ENCODE measurements at regions of chr6 and their contacts with region 1.

Region 1: DNA sequence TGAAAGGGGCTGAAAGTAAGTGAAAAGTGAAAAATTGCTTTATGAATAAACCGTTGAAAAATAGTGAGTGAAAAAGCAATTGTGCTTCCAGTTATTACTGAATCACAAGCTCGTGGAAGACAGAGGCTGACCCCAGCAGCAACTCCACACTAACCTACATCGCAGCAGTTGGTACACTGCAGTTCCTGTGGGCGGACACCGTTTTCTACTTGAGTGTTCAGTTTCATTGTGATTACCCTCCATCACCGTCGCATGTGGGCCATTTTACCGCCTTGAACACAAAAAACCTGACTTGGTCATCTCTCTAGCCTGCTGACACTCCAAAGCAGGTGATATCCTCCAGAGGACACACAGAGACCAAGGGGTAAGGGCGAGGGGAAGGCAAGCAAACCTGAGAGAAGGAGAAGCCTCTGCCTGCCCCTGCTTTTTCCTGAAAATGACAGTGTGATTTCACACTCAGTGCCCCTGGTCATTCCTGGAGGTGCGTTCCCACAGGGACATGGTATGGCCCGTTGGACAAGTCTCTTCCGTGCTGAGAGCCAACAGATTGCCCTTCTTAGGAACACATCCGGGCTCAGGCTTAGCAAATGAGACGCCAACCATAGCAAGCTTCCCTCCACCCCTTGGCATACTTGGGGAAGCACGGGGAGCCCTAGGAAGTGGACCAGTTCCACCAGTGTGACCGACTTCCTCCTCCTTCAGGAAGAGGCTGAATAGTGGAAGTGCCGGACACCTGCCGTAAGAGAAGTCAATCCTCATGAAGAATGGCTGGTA is 28.5 kb downstream of the PRDM1 start:
- DNase-seq: peak; percentile 90
- ATAC-seq: peak; percentile 85
- H3K4me3 Mint-ChIP-seq: peak overlapping the region; percentile 38
- H3K27ac Mint-ChIP-seq: peak overlapping the region; percentile 85
- H3K4me1 Mint-ChIP-seq: peaks cover 83% of the 10 kb centered on the region
- H3K27me3 Mint-ChIP-seq: peaks cover 24% of the 10 kb centered on the region

Region 2: DNA sequence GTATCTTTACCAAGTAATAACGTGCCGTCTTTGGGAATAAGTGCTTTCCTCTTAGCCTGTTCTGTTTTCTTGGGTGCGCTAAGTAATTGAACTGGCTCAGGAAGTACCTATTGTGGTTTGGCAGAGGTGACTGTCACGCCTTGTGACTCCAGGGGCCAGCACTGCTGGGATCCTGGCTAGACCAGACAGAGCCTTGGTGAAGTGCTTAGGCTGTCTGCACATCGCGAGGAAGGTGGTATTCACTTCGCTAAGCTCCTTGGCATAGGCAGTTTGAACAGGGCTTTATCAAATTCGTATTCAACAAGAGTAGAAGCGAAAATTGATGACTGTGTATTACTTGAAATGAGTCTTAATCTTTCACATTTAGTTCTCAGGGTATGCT is 11.0 kb before region 1 on chr6:
- CTCF ChIA-PET with region 1: interaction called, 9 read pairs
- POLR2A ChIA-PET with region 1: interaction called, 16 read pairs
- intact Hi-C with region 1: loop called (anchors 1 kb)
- DNase-seq: peak; percentile 65
- ATAC-seq: peak; percentile 47
- H3K4me3 Mint-ChIP-seq: peak overlapping the region; percentile 82
- H3K27ac Mint-ChIP-seq: peak overlapping the region; percentile 62
- H3K4me1 Mint-ChIP-seq: peaks cover 77% of the 10 kb centered on the region
- H3K27me3 Mint-ChIP-seq: peaks cover 16% of the 10 kb centered on the region

Region 3: DNA sequence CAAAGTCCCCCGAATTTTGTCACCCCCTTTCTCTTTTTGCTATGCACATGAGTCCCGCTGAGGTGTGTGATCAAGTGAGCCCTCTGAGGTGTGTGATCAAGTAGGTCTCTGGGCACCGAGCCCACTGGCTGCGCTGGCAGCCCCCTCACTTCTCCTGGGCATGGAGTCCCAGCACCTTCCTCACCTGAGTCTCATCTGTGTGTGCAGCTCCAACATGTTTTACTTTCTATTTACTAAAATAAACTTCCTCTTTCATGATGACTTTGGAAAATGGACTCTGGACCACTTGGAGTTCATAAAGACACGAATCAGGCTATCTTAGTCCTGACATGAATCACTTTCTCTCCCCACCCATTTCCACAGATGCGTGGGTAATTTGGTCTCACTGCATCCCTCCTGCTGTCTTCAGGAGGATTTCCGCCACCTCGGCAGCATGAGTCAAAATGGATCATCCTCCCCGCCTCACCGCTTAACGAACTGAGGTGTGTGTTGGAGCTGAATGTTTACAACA is 11.3 kb after region 1 on chr6:
- CTCF ChIA-PET with region 1: interaction called, 4 read pairs
- POLR2A ChIA-PET with region 1: interaction called, 4 read pairs
- intact Hi-C with region 1: loop called in 1 of 2 experiments (anchors 1 kb)
- DNase-seq: peak; percentile 74
- ATAC-seq: peak; percentile 83
- H3K4me3 Mint-ChIP-seq: peak overlapping the region; percentile 27
- H3K27ac Mint-ChIP-seq: peak overlapping the region; percentile 68
- H3K4me1 Mint-ChIP-seq: peaks cover 33% of the 10 kb centered on the region
- H3K27me3 Mint-ChIP-seq: peaks cover 8% of the 10 kb centered on the region

Region 4: GRCh38 chr6:106141441-106142237 is 27.0 kb after region 1 on chr6:
- CTCF ChIA-PET with region 1: interaction called, 5 read pairs
- POLR2A ChIA-PET with region 1: interaction called, 3 read pairs
- intact Hi-C with region 1: loop called (anchors 1 to 2 kb)
- DNase-seq: peak; percentile 76
- ATAC-seq: peak; percentile 93
- H3K4me3 Mint-ChIP-seq: peak overlapping the region; percentile 26
- H3K27ac Mint-ChIP-seq: peak overlapping the region; percentile 85
- H3K4me1 Mint-ChIP-seq: peaks cover 48% of the 10 kb centered on the region
- H3K27me3 Mint-ChIP-seq: peaks cover 2% of the 10 kb centered on the region

Region 5: GRCh38 chr6:106181664-106182418 is 67.2 kb after region 1 on chr6:
- CTCF ChIA-PET with region 1: interaction called, 3 read pairs
- POLR2A ChIA-PET with region 1: no interaction called
- intact Hi-C with region 1: loop called (anchors 1 kb)
- DNase-seq: no peak
- ATAC-seq: peak; percentile 64
- H3K4me3 Mint-ChIP-seq: no peak overlapping the region
- H3K27ac Mint-ChIP-seq: peak overlapping the region; percentile 44
- H3K4me1 Mint-ChIP-seq: peaks cover 48% of the 10 kb centered on the region
- H3K27me3 Mint-ChIP-seq: peaks cover 4% of the 10 kb centered on the region

Region 6: GRCh38 chr6:106187424-106187982 is 72.8 kb after region 1 on chr6:
- CTCF ChIA-PET with region 1: interaction called, 4 read pairs
- POLR2A ChIA-PET with region 1: no interaction called
- intact Hi-C with region 1: loop called (anchors 1 kb)
- DNase-seq: no peak
- ATAC-seq: no peak
- H3K4me3 Mint-ChIP-seq: no peak overlapping the region
- H3K27ac Mint-ChIP-seq: peak overlapping the region; percentile 55
- H3K4me1 Mint-ChIP-seq: peaks cover 56% of the 10 kb centered on the region
- H3K27me3 Mint-ChIP-seq: no peaks in the 10 kb centered on the region

Measured in activated CD4-positive, alpha-beta T cell treated with anti-CD3 and anti-CD28 coated beads for 36 hours (primary cell).